ENCODE measurements at regions of chr2 and their contacts with region 1.

Region 1: DNA sequence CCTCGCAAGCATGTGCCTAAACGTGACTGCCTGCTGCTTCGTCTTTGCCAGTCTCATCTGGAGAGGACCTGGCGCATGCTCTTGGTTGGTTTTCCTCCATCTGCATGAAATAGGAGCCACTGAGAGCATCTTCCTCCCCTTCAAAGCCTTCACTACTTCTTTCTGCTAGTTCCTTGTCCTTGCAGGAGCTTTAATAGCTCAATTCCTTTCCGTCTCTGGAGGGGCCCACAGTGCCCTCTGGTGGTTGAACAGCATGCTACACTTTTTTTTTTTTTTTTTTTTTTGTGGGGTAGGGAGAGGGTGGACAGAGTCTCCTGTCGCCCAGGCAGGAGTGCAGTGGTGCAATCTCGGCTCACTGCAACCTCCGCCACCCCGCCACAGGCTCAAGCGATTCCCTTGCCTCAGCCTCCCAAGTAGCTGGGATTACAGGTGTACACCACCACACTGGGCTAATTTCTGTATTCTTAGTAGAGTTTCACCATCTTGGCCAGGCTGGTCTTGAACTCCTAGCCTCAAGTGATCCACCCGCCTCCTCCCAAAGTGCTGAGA is 59.6 kb downstream of the SP110 start:
- DNase-seq: peak; percentile 28 to 64 (median 63)
- ATAC-seq: peak; percentile 61 to 78
- H3K4me3 ChIP-seq: no peak overlapping the region
- H3K27ac ChIP-seq: no peak overlapping the region
- H3K4me1 ChIP-seq: no peaks in the 10 kb centered on the region
- H3K27me3 ChIP-seq: no peaks in the 10 kb centered on the region

Region 2: GRCh38 chr2:229642371-229642770 is 517.8 kb before region 1 on chr2:
- intact Hi-C with region 1: no loop called
- DNase-seq: peak in 1 of 3 donors; percentile 13
- ATAC-seq: no peak
- H3K4me3 ChIP-seq: no peak overlapping the region
- H3K27ac ChIP-seq: no peak overlapping the region
- H3K4me1 ChIP-seq: no peaks in the 10 kb centered on the region
- H3K27me3 ChIP-seq: no peaks in the 10 kb centered on the region

Region 3: DNA sequence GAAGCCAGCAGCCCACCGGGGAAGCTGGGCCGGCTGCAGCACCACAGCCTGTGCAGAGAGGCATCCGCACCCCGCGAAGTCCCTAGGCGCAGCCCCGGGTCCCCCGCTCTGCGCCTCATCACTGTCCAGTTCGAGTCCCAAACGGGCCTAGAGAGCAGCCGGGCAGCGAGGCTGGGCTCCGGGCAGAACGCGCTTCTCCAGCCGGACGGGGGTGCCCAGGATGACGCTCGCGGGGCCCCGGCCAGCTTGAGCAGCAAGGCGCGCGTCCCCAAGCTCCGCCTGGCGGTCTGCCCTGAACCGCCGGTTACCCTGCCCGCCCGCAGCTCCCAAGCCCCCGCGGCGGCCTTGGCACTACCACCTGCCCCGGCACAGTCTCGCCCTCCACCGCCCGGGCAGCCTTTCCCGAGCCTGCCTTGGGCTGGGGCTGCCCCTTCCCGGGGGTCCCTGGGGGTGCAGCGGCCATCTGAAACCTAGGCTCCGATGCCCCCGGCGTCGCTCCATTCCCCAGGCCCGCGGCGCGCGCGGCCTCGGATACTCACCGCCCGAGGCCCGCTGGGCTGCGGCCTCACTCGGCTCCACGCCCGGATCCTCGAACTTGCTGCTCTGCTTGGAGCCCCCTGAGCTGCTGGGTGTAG is 92.1 kb before region 1 on chr2:
- intact Hi-C with region 1: loop called in 2 of 4 experiments (anchors 10 kb)
- DNase-seq: peak; percentile 61 to 86 (median 85)
- ATAC-seq: peak; percentile 79 to 85
- H3K4me3 ChIP-seq: peak overlapping the region; percentile 52
- H3K27ac ChIP-seq: no peak overlapping the region
- H3K4me1 ChIP-seq: no peaks in the 10 kb centered on the region
- H3K27me3 ChIP-seq: no peaks in the 10 kb centered on the region

Region 4: DNA sequence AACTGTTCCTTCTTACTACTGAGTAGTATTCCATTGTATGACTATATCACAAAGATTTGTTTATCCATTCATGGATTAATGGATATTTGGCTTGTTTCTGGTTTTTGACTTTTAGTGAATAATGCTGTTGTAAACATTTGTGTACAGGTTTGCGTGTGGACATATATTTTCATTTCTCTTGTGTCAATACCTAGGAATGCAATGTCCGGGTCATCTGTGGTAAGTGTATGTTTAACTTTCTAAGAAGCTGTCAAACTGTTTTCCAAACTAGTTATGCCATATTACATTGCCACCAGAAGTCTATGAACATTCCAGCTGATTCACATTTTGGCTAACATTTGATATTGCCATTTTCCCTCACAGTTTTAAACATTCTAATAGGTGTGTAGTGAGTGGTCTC is 62.3 kb before region 1 on chr2:
- intact Hi-C with region 1: no loop called
- DNase-seq: no peak
- ATAC-seq: no peak
- H3K4me3 ChIP-seq: no peak overlapping the region
- H3K27ac ChIP-seq: no peak overlapping the region
- H3K4me1 ChIP-seq: no peaks in the 10 kb centered on the region
- H3K27me3 ChIP-seq: no peaks in the 10 kb centered on the region

Region 5: GRCh38 chr2:230614913-230615332 is 454.7 kb after region 1 on chr2:
- intact Hi-C with region 1: loop called in 2 of 4 experiments (anchors 10 kb)
- DNase-seq: no peak
- ATAC-seq: no peak
- H3K4me3 ChIP-seq: no peak overlapping the region
- H3K27ac ChIP-seq: no peak overlapping the region
- H3K4me1 ChIP-seq: no peaks in the 10 kb centered on the region
- H3K27me3 ChIP-seq: no peaks in the 10 kb centered on the region

Measured in right cardiac atrium (tissue), 5 donors.